Lower leg skin (tissue), 4 donors: ENCODE measurements at regions of chr12 and their contacts with region 1.

Region 1: GRCh38 chr12:56840922-56841321 is 77.8 kb downstream of the HSD17B6 start:
- DNase-seq: no peak
- H3K4me3 ChIP-seq: no peak overlapping the region
- CTCF ChIP-seq: no peak
- POLR2A ChIP-seq: no peak

Region 2: GRCh38 chr12:56873382-56873781 is 32.5 kb after region 1 on chr12:
- intact Hi-C with region 1: loop called (anchors 1 kb)
- DNase-seq: no peak
- H3K4me3 ChIP-seq: no peak overlapping the region
- CTCF ChIP-seq: no peak
- POLR2A ChIP-seq: no peak